ENCODE measurements at regions of chr3 and their contacts with region 1.

Region 1: GRCh38 chr3:45037734-45038455 is 11.8 kb downstream of the CLEC3B start:
- DNase-seq: peak; percentile 76 to 91 (median 82)
- H3K4me3 ChIP-seq: no peak overlapping the region
- H3K4me3 Mint-ChIP-seq: peak overlapping the region in 4 of 7 donors; percentile 20 to 75 (median 36)
- H3K27ac ChIP-seq: no peak overlapping the region
- H3K27ac Mint-ChIP-seq: peak overlapping the region in 1 of 8 donors; percentile 83
- H3K4me1 ChIP-seq: peaks cover 33% of the 10 kb centered on the region
- H3K4me1 Mint-ChIP-seq: peaks cover 18 to 34% (median 22%) of the 10 kb centered on the region in 3 donors
- H3K27me3 ChIP-seq: peaks cover 8% of the 10 kb centered on the region
- H3K27me3 Mint-ChIP-seq: peaks cover 33 to 43% of the 10 kb centered on the region in 2 donors

Region 2: GRCh38 chr3:45210308-45211041 is 172.6 kb after region 1 on chr3:
- CTCF ChIA-PET with region 1: interaction called, 181 read pairs
- POLR2A ChIA-PET with region 1: no interaction called
- DNase-seq: peak; percentile 59 to 83 (median 73)
- H3K4me3 ChIP-seq: no peak overlapping the region
- H3K4me3 Mint-ChIP-seq: no peak overlapping the region
- H3K27ac ChIP-seq: no peak overlapping the region
- H3K27ac Mint-ChIP-seq: no peak overlapping the region
- H3K4me1 ChIP-seq: peaks cover 12% of the 10 kb centered on the region
- H3K4me1 Mint-ChIP-seq: peaks cover 8 to 18% (median 11%) of the 10 kb centered on the region in 3 donors
- H3K27me3 ChIP-seq: no peaks in the 10 kb centered on the region
- H3K27me3 Mint-ChIP-seq: peaks cover 16 to 33% of the 10 kb centered on the region in 2 donors

Region 3: DNA sequence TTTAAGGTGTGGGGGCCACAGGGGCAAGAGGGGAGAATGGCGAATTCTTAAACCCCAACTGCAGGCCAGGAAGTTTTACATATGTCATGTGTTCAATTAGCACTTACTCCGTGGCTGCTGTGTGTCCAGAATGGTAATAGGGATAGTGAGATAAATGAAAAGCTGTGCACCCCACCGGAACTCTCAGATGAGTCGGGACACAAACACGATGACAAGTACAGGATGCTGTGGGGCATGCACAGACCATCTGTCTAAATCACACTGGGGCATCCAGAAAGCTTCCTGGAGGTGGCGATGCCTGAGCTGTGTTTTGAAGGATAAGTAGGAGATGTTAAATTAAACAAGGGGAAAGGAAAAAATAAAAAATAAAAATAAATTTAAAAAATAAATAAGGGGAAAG is 206.5 kb after region 1 on chr3:
- CTCF ChIA-PET with region 1: no interaction called
- POLR2A ChIA-PET with region 1: no interaction called
- DNase-seq: no peak
- H3K4me3 ChIP-seq: no peak overlapping the region
- H3K4me3 Mint-ChIP-seq: no peak overlapping the region
- H3K27ac ChIP-seq: no peak overlapping the region
- H3K27ac Mint-ChIP-seq: no peak overlapping the region
- H3K4me1 ChIP-seq: no peaks in the 10 kb centered on the region
- H3K4me1 Mint-ChIP-seq: no peaks in the 10 kb centered on the region
- H3K27me3 ChIP-seq: no peaks in the 10 kb centered on the region
- H3K27me3 Mint-ChIP-seq: peaks cover 15 to 32% of the 10 kb centered on the region in 2 donors